Naive thymus-derived CD4-positive, alpha-beta T cell (primary cell): ENCODE measurements at regions of chr5 and their contacts with region 1.

Region 1: GRCh38 chr5:157271740-157272271 is 5.9 kb downstream of the CYFIP2 start:
- DNase-seq: peak; percentile 63 to 94 (median 91)
- ATAC-seq: peak; percentile 95
- H3K4me3 ChIP-seq: peak overlapping the region; percentile 37
- H3K4me3 Mint-ChIP-seq: peak overlapping the region; percentile 71 to 95 (median 84)
- H3K27ac ChIP-seq: peak overlapping the region; percentile 84
- H3K27ac Mint-ChIP-seq: peak overlapping the region; percentile 95 to 100 (median 99)
- H3K4me1 ChIP-seq: peaks cover 76 to 78% of the 10 kb centered on the region in 2 donors
- H3K4me1 Mint-ChIP-seq: peaks cover 73 to 95% (median 90%) of the 10 kb centered on the region in 7 donors
- H3K27me3 ChIP-seq: no peaks in the 10 kb centered on the region
- H3K27me3 Mint-ChIP-seq: no peaks in the 10 kb centered on the region

Region 2: DNA sequence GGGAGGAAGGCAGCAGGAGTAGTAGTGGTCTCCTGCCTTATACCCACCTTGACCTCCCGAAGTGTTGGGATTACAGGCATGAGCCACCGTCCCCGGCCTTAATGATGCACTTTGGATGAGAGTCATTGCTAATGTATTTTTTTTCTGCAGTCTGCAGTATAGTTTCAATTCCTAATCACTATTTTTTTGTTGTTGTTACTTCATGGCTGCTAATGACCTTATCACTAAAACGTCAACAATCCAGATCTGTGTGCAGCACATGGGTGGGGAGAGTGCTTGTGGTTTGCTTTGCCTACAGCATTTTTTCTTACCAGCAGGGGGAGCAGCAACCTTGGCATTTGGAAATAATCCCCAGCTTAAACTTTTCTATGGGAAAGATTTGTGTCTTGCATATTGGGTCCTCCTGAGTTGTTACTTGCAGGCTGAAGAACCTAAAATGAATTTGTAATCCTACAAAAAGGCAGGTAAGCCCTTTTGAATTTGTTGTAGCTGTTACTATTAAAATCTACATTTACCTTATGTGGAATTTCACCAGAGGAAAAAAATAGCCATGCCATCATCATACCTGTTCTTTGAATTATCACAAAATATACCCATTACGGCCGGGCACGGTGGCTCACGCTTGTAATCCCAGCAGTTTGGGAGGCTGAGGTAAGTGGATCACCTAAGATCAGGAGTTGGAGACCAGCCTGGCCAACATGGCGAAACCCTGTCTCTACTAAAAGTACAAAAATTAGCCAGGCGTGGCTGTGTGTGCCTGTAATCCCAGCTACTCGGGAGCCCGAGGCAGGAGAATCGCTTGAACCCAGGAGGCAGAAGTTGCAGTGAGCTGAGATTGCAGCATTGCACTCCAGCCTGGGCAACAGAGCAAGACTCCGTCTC is 122.8 kb before region 1 on chr5:
- CTCF ChIA-PET with region 1: interaction called, 16 read pairs
- POLR2A ChIA-PET with region 1: interaction called, 15 read pairs
- intact Hi-C with region 1: loop called in 1 of 2 experiments (anchors 1 kb)
- DNase-seq: peak; percentile 46 to 86 (median 80)
- ATAC-seq: peak; percentile 94
- H3K4me3 ChIP-seq: no peak overlapping the region
- H3K4me3 Mint-ChIP-seq: peak overlapping the region in 7 of 10 donors; percentile 1 to 73 (median 33)
- H3K27ac ChIP-seq: peak overlapping the region; percentile 42
- H3K27ac Mint-ChIP-seq: peak overlapping the region; percentile 5 to 85 (median 80)
- H3K4me1 ChIP-seq: peaks cover 15 to 31% of the 10 kb centered on the region in 2 donors
- H3K4me1 Mint-ChIP-seq: peaks cover 25 to 56% (median 42%) of the 10 kb centered on the region in 7 donors
- H3K27me3 ChIP-seq: no peaks in the 10 kb centered on the region
- H3K27me3 Mint-ChIP-seq: no peaks in the 10 kb centered on the region

Region 3: DNA sequence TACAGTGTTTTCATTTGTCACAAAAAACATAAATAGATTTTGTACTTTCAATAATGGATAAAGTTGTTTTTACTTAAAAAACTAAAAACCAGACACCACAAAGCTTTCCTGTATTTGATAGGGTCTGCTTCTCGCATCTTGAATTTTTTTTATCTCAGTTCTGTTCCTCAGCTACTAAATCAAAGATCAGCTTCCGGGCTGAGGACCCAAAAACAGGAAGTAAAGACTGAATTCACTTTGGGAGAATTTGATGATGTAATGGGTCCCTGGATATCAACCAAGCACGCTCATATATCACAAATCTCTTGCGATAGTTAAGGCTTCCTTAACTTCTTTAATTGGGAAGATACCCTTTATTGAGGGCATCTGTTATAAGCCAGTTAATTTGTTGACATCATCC is 67.0 kb before region 1 on chr5:
- CTCF ChIA-PET with region 1: interaction called, 4 read pairs
- POLR2A ChIA-PET with region 1: interaction called, 15 read pairs
- intact Hi-C with region 1: no loop called
- DNase-seq: peak in 7 of 9 donors; percentile 44 to 84 (median 73)
- ATAC-seq: peak; percentile 69
- H3K4me3 ChIP-seq: peak overlapping the region; percentile 10
- H3K4me3 Mint-ChIP-seq: peak overlapping the region; percentile 7 to 93 (median 76)
- H3K27ac ChIP-seq: peak overlapping the region; percentile 64
- H3K27ac Mint-ChIP-seq: peak overlapping the region; percentile 79 to 98 (median 95)
- H3K4me1 ChIP-seq: peaks cover 77 to 87% of the 10 kb centered on the region in 2 donors
- H3K4me1 Mint-ChIP-seq: peaks cover 43 to 96% (median 90%) of the 10 kb centered on the region in 7 donors
- H3K27me3 ChIP-seq: no peaks in the 10 kb centered on the region
- H3K27me3 Mint-ChIP-seq: no peaks in the 10 kb centered on the region

Region 4: DNA sequence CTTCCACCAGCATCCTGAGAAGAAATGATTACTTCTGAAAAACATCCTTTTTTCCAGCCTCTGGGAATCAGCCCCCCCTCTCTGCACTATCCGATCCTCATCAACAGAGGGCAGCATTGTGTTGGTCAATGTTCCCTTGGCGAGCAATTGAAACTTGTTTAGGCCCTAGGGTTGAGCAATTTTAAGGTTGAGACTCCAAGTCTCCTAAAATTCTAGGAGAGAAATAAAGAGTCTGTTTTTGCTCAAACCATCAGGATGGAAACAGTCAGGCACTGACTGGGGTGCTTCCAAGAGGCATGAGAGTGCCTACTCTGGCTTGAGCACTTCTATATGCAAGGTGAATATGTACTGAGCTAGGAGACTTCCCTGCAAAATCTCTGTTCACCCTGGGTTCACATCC is 18.3 kb before region 1 on chr5:
- CTCF ChIA-PET with region 1: interaction called, 25 read pairs
- POLR2A ChIA-PET with region 1: interaction called, 200 read pairs
- intact Hi-C with region 1: loop called (anchors 1 kb)
- DNase-seq: no peak
- ATAC-seq: peak; percentile 44
- H3K4me3 ChIP-seq: peak overlapping the region; percentile 31
- H3K4me3 Mint-ChIP-seq: peak overlapping the region; percentile 62 to 79 (median 72)
- H3K27ac ChIP-seq: peak overlapping the region; percentile 66
- H3K27ac Mint-ChIP-seq: peak overlapping the region; percentile 86 to 98 (median 96)
- H3K4me1 ChIP-seq: peaks cover 93 to 97% of the 10 kb centered on the region in 2 donors
- H3K4me1 Mint-ChIP-seq: peaks cover 64 to 99% (median 94%) of the 10 kb centered on the region in 7 donors
- H3K27me3 ChIP-seq: no peaks in the 10 kb centered on the region
- H3K27me3 Mint-ChIP-seq: no peaks in the 10 kb centered on the region

Region 5: DNA sequence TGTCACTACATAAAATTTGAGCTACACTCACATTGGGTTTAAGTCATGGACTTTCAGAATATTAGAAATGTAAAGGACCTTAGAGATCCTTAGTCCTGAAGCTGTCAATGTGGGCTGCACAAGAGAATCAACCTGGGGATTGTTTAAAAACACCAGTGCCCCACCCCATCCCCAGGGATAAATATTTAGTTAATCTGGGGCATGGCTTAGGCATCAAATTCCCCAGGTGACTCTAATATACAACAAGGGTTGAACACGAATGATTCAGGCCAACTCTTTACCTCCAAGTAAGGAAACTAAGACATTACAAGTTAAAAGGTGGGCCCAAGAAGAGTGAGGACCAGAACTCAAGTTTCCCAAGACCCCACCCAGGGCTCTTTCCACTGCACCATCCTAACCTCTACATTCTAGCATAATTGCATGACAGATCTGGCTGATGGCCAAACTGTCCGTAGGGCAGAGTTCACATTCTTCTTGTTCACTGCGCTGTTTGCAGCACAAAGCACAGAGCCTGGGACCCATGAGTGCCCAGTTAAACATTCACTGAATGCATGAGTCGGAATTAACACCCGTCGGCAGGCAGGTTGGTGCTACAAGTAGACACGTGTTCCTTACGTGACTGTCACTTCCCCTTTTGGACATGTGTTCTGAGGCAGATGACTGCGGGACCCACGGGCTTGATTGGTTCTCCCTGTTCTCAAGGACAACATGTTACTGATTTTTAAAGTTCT is 19.3 kb after region 1 on chr5:
- CTCF ChIA-PET with region 1: interaction called, 22 read pairs
- POLR2A ChIA-PET with region 1: interaction called, 53 read pairs
- intact Hi-C with region 1: loop called in 1 of 2 experiments (anchors 1 kb)
- DNase-seq: no peak
- ATAC-seq: peak; percentile 68
- H3K4me3 ChIP-seq: no peak overlapping the region
- H3K4me3 Mint-ChIP-seq: peak overlapping the region in 2 of 10 donors; percentile 13 to 67
- H3K27ac ChIP-seq: peak overlapping the region; percentile 42
- H3K27ac Mint-ChIP-seq: peak overlapping the region; percentile 63 to 95 (median 89)
- H3K4me1 ChIP-seq: peaks cover 0 to 54% of the 10 kb centered on the region in 2 donors
- H3K4me1 Mint-ChIP-seq: peaks cover 38 to 93% (median 66%) of the 10 kb centered on the region in 7 donors
- H3K27me3 ChIP-seq: no peaks in the 10 kb centered on the region
- H3K27me3 Mint-ChIP-seq: no peaks in the 10 kb centered on the region

Region 6: GRCh38 chr5:157540707-157541446 is 269.1 kb after region 1 on chr5:
- CTCF ChIA-PET with region 1: no interaction called
- POLR2A ChIA-PET with region 1: no interaction called
- intact Hi-C with region 1: loop called in 1 of 2 experiments (anchors 5 kb)
- DNase-seq: peak in 1 of 9 donors; percentile 57
- ATAC-seq: peak; percentile 51
- H3K4me3 ChIP-seq: peak overlapping the region; percentile 19
- H3K4me3 Mint-ChIP-seq: peak overlapping the region in 5 of 10 donors; percentile 7 to 81 (median 12)
- H3K27ac ChIP-seq: no peak overlapping the region
- H3K27ac Mint-ChIP-seq: peak overlapping the region in 7 of 9 donors; percentile 2 to 99 (median 45)
- H3K4me1 ChIP-seq: peaks cover 14 to 65% of the 10 kb centered on the region in 2 donors
- H3K4me1 Mint-ChIP-seq: peaks cover 12 to 92% (median 29%) of the 10 kb centered on the region in 7 donors
- H3K27me3 ChIP-seq: no peaks in the 10 kb centered on the region
- H3K27me3 Mint-ChIP-seq: no peaks in the 10 kb centered on the region